Activated T-helper 2 cell treated with anti-CD3 and anti-CD28 coated beads, Interferon-gamma antibody, Interleukin-2, Interleukin-4, amounts not matched to agents 10 μg/mL and 5 μg/mL and 100 μg/mL, durations not matched to agents 14 hours and 24 hours and 36 hours (primary cell): ENCODE measurements at regions of chr3 and their contacts with region 1.

Region 1: GRCh38 chr3:27861046-27862036 is 139.2 kb upstream of the EOMES start:
- DNase-seq: no peak
- H3K4me3 Mint-ChIP-seq: no peak overlapping the region
- H3K27ac Mint-ChIP-seq: peak overlapping the region; percentile 86
- H3K4me1 Mint-ChIP-seq: peaks cover 35% of the 10 kb centered on the region
- H3K27me3 Mint-ChIP-seq: no peaks in the 10 kb centered on the region

Region 2: DNA sequence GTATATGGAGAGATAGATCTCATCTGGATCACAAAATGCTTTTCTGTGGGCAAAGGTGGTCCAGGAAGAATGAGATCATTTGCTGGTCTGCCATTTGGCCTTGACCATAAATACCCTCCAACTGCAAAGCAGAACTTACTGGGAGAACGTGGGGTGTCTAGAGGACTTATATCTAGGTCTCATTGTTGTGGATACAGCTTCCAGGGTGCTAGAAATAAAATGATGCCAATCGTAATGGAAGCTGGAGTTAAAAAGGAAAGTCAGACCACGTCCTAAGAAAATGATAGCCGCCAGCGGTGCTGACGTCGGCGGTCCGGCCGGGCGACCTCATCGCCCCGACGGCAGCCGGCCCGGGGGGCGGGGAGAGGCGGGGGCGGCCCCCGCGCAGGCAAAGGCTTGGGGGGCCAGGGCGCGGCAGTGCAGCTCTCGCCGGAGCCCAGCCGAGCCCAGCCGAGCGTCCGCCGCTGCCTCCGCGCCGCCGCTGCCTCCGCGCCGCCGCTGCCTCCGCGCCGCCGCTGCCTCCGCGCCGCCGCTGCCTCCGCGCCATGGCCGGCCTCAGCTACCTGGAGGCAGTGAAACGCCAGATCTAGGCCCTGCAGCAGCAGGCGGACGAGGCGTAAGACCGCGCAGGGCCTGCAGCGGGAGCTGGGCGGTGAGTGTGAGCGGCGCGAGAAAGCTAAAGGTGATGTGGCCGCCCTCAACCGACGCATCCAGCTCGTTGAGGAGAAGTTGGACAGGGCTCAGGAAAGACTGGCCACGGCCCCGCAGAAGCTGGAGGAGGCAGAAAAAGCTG is 228.7 kb before region 1 on chr3:
- intact Hi-C with region 1: no loop called
- DNase-seq: peak; percentile 34
- H3K4me3 Mint-ChIP-seq: peak overlapping the region; percentile 93
- H3K27ac Mint-ChIP-seq: peak overlapping the region; percentile 90
- H3K4me1 Mint-ChIP-seq: peaks cover 44% of the 10 kb centered on the region
- H3K27me3 Mint-ChIP-seq: no peaks in the 10 kb centered on the region

Region 3: GRCh38 chr3:27844052-27844675 is 17.2 kb before region 1 on chr3:
- intact Hi-C with region 1: loop called (anchors 2 kb)
- DNase-seq: no peak
- H3K4me3 Mint-ChIP-seq: no peak overlapping the region
- H3K27ac Mint-ChIP-seq: peak overlapping the region; percentile 2
- H3K4me1 Mint-ChIP-seq: peaks cover 24% of the 10 kb centered on the region
- H3K27me3 Mint-ChIP-seq: no peaks in the 10 kb centered on the region

Region 4: GRCh38 chr3:27900316-27900715 is 39.0 kb after region 1 on chr3:
- intact Hi-C with region 1: loop called (anchors 5 kb)
- DNase-seq: no peak
- H3K4me3 Mint-ChIP-seq: no peak overlapping the region
- H3K27ac Mint-ChIP-seq: peak overlapping the region; percentile 68
- H3K4me1 Mint-ChIP-seq: peaks cover 25% of the 10 kb centered on the region
- H3K27me3 Mint-ChIP-seq: no peaks in the 10 kb centered on the region